ENCODE measurements at regions of chr6 and their contacts with region 1.

Region 1: DNA sequence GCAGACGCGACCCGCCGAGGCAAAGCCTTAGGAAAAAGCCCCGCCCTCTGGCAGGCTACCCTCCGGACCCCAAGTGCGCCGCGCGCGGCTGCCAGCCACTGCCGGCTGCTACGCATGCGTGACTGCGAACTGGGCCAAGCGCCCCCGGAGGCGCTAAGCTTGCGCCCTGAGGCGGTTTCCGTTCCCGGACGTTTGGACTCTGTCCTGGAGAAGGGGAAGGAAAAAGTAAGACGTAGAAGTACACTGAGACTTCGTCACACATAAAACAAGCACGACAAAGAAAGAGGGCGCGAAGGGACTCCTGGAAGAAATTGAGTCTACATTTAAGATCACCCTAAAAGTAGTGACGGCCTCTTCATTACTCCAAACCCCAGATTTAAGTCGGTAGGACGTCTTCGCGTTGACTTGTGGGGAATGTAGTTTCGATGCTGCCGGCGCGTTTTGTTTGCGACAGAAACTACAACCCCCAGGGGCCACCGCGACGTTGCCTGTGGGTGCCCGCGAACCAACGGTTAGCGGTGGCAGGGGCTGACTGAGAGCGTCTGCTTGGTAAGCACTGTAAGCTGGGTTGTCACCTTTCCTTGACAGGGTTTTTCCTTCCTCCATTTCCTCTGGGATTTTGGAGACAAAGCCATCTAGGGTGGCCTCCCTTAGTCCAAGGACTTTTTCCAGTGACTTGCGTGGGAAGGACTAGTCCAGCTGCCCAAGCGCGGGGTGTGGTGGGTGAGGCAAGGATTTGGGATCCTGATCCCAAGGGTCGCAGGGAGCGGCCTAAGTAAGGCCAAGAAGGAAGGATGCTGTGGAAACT is at the start of gene CEP57L1:
- H3K4me3 ChIP-seq: peak within 1 kb of the TSS; percentile 61
- H3K27ac ChIP-seq: peak within 1 kb of the TSS; percentile 94
- H3K4me1 ChIP-seq: 0 out of 2 replicates have a peak, but pooled peaks cover 3% of the 10 kb centered on the region
- CTCF ChIP-seq: peak; percentile 36; the same call in 1 of the 2 replicates

Region 2: DNA sequence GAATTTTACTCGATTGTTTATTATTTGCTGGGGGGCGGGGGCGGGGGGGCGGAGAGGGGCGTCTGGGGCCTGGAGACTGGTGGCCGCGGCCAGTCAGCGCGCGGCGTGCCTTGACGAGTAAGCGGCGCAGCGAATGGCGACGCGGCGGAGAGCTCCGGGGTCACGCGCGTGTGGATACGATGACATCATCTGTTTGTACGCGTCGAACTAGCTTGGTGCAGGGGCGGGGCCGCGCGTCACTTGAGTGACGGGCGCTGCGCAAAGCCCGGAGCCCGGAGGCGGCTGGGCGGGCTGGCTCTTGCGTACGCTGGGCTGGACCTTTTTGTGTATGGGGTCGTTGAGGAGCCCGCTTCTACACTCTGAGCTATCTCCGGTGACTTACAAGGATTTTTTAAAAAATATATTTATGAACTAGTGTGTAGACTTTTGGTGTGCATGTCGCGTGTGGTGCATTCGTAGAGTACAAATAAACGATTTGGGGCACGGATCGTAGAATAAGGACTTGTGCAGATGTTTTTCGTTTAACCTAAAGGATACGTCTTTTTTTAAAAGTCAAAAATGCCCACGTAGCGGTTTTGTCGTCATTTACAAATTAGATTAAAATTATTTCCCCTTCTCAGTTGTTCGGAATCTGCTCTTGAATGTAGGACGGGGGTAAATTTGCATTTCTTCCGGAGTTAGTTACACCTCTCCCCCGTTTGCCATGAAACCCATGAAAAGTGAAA is 536.7 kb before region 1 on chr6:
- CTCF ChIA-PET with region 1: interaction called, 3 read pairs
- POLR2A ChIA-PET with region 1: interaction called, 14 read pairs
- H3K4me3 ChIP-seq: peak overlapping the region; percentile 85
- H3K27ac ChIP-seq: peak overlapping the region; percentile 100
- H3K4me1 ChIP-seq: peaks cover 7% of the 10 kb centered on the region
- CTCF ChIP-seq: no peak

Region 3: DNA sequence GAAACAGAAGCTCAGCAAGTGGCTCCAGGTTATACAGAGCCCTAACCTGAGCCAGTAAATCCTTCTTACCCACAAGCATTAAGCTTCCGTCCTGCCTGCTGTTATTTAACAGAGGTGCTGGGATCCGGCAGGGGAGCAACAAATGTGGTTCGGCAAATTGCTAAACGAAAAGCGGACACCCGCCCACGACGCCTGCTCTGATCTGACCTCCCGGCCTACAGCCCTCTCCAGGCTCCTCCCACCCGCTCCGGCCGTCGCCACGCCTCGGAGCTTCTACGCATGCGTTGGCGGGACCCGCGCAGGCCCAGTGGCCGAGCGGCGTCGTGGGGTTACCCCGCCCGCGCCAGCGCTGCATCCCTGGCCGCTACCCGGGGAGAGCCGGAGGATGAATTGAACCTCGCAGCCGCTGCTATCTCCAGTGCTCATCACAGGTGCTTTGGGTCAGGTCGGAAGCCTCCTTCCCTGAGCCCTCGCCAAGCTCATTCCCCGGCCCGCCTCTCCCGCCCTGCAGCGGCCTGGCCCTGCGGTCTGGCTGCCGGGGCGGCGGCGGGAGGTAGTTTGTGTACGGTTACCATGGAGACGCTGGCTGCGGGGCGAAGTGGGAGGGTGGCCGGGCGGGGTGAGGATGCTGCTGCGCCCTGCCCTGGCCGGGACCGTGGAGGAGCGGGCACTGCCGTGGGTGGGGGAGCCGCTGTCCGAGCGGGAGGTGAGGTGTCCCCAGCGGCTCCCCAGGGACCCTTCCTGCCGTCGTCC is 246.9 kb before region 1 on chr6 and contains the start of gene ARMC2:
- CTCF ChIA-PET with region 1: no interaction called
- POLR2A ChIA-PET with region 1: interaction called, 16 read pairs
- H3K4me3 ChIP-seq: peak within 1 kb of the TSS; percentile 72
- H3K27ac ChIP-seq: no peak within 1 kb of the TSS; the same call in 1 of the 2 replicates
- H3K4me1 ChIP-seq: peaks cover 4% of the 10 kb centered on the region; the same call in 1 of the 2 replicates
- CTCF ChIP-seq: no peak

Region 4: GRCh38 chr6:109009236-109009961 is 85.8 kb before region 1 on chr6:
- CTCF ChIA-PET with region 1: no interaction called
- POLR2A ChIA-PET with region 1: interaction called, 27 read pairs
- H3K4me3 ChIP-seq: peak overlapping the region; percentile 97
- H3K27ac ChIP-seq: peak overlapping the region; percentile 97
- H3K4me1 ChIP-seq: peaks cover 26% of the 10 kb centered on the region
- CTCF ChIP-seq: peak; percentile 4; the same call in 1 of the 2 replicates

Region 5: DNA sequence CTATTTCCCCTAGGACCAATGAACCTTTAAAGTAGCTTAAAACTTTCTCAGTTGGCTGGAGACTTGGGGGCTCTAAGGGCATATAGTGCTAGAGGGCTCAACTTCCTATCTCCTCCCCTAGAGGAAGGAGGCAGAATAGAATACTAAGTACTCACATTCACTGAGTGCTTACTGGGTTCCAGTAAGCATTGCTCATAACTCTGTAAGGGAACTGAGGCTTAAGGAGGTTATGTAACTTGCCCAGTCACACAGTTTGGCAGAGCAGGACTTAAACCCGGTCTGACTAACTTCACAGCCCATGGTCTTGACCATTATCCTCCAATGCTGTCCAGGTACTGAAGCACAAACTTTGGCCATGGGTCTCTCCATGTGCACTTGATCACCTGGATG is 13.0 kb before region 1 on chr6:
- CTCF ChIA-PET with region 1: interaction called, 3 read pairs
- POLR2A ChIA-PET with region 1: interaction called, 23 read pairs
- H3K4me3 ChIP-seq: no peak overlapping the region
- H3K27ac ChIP-seq: 0 out of 2 replicates have a peak overlapping the region, but pooled peaks have one; percentile 7
- H3K4me1 ChIP-seq: peaks cover 13% of the 10 kb centered on the region
- CTCF ChIP-seq: no peak

Region 6: DNA sequence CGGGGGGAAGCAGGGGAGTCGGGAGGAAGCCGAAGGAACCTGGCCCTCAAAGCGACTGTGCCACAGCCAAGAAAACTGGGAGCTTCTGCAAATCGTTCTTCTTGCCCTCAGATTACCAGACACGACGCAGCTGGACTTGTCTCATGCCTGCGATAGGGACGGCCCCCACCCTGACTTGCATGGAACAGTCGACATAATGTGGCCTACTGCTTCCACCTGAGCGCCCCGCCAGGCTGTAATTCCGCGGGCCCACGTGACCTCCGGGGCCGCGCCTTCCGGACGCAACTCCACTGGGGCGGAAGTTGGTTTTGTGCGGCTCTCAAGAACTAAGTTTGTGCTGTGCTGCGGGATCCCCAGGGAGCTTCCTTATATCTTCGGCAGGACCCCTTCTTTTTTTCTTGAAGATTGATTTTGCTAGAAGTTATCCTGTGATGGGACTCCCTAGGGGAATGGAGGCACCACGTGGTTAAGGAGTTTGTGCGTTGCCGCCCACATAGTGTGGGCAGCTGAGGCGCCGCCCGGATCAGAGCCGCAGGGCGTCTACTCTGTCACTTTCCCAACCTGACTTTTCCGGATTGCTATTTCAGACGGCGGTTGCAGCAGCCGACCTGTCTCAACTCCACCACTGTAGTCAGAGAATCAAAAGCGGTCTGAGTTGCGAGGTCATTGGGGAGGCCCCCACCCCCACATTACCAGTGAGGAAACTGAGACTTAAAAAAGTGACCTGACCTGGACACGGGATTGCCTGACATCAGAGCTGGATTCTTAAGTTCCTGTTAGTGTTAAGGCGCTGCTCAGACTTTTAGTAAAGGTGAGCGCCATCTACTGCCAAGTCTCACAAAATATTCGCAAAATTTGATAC is 287.6 kb after region 1 on chr6:
- CTCF ChIA-PET with region 1: interaction called, 3 read pairs
- POLR2A ChIA-PET with region 1: interaction called, 23 read pairs
- H3K4me3 ChIP-seq: peak overlapping the region; percentile 78
- H3K27ac ChIP-seq: peak overlapping the region; percentile 98
- H3K4me1 ChIP-seq: peaks cover 8% of the 10 kb centered on the region
- CTCF ChIP-seq: peak; percentile 55

Region 7: DNA sequence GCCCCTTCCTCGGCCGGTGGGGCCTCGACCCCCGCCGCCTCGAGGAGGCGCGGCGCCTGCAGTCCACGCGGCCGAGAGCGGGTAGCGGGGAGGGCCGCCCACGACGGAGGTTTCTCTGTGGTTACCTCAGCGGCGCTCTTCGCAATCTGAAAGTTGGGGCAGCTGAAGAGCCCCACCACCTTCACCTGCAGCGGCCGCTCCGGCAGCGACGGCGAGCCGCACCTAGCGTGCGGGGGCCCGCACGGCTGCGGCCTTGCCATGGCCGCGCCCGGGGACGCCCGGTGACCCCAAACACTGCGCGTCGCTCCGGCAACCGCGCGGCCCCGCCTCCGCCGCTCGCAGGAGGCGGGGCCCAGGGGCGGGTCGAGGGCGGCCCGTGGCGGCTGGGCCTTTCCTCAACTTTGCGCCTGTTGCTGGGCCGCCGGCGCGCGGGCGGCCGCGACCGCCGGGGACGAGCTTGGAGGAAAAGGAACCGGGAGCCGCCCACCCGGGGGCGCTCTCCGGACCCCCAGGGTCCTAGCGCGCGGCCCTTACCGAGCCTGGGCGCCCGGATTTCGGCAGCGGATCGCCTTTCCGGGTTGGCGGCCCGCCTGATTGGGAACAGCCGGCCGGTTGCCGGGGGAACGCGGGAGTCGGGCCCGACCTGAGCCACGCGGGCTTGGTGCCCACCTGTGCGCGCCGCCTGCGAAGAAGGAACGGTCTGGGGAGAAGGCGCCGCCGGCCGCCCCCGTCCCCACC is 345.3 kb after region 1 on chr6 and contains the starts of genes PPIL6 and SMPD2:
- CTCF ChIA-PET with region 1: no interaction called
- POLR2A ChIA-PET with region 1: interaction called, 10 read pairs
- H3K4me3 ChIP-seq: peak within 1 kb of the TSS; percentile 82
- H3K27ac ChIP-seq: peak within 1 kb of the TSS; percentile 68; the same call in 1 of the 2 replicates
- H3K4me1 ChIP-seq: no peaks in the 10 kb centered on the region
- CTCF ChIP-seq: peak; percentile 59; the same call in 1 of the 2 replicates

Measured in HEK293 (cell line).